Activated naive CD4-positive, alpha-beta T cell treated with anti-CD3 and anti-CD28 coated beads for 36 hours (primary cell): ENCODE measurements at regions of chr15 and their contacts with region 1.

Region 1: DNA sequence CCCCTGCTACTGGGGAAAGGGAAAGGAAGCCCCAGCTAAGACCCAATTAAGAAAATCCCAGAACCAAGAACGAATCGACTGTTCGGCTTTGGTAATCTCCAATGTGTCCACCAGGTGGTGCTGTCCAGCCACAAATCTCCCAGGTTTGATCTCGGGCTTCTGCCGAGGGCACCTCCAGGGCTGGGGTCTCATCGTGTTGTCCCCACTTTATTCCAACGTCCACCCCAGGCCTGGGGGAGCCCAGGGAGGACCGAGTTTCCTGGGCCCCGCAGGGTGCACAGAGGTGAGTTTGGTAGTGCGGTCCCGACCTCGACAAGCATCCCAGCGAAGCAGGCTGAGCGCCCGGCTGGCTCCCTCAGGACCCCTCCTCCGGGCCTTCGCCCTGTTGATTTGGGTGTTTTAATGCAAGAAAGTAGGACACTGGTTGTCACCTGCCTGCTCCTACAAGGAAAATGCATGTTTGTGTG is 185.1 kb downstream of the GOLGA6L6 start:
- DNase-seq: peak; percentile 86
- H3K4me3 Mint-ChIP-seq: no peak overlapping the region
- H3K27ac Mint-ChIP-seq: peak overlapping the region; percentile 13
- H3K4me1 Mint-ChIP-seq: peaks cover 7% of the 10 kb centered on the region
- H3K27me3 Mint-ChIP-seq: no peaks in the 10 kb centered on the region

Region 2: GRCh38 chr15:20409247-20409646 is 52.8 kb after region 1 on chr15:
- CTCF ChIA-PET with region 1: no interaction called
- intact Hi-C with region 1: loop called (anchors 5 kb)
- DNase-seq: no peak
- H3K4me3 Mint-ChIP-seq: no peak overlapping the region
- H3K27ac Mint-ChIP-seq: no peak overlapping the region
- H3K4me1 Mint-ChIP-seq: no peaks in the 10 kb centered on the region
- H3K27me3 Mint-ChIP-seq: no peaks in the 10 kb centered on the region

Region 3: DNA sequence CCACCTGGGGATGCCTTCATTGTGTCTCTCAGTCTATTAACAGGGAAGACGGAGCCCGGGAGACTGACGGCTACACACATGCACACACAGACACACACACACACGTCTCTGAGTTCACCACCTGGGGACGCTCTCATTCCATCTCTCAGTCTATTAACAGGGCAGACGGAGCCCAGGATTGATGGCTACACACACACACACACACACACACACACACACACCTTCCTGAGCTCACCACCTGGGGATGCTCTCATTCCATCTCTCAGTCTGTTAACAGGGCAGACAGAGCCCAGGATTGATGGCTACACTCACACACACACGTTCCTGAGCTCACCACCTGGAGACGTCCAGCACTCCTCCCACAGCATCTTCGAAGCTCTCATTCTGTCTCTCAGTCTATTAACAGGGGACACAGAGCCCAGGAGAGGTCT is 1867.8 kb after region 1 on chr15:
- CTCF ChIA-PET with region 1: interaction called, 97 read pairs
- intact Hi-C with region 1: no loop called
- DNase-seq: peak; percentile 49
- H3K4me3 Mint-ChIP-seq: no peak overlapping the region
- H3K27ac Mint-ChIP-seq: no peak overlapping the region
- H3K4me1 Mint-ChIP-seq: peaks cover 22% of the 10 kb centered on the region
- H3K27me3 Mint-ChIP-seq: peaks cover 3% of the 10 kb centered on the region

Region 4: GRCh38 chr15:22265056-22265945 is 1908.8 kb after region 1 on chr15:
- CTCF ChIA-PET with region 1: no interaction called
- intact Hi-C with region 1: loop called (anchors 1 kb)
- DNase-seq: peak; percentile 45
- H3K4me3 Mint-ChIP-seq: no peak overlapping the region
- H3K27ac Mint-ChIP-seq: no peak overlapping the region
- H3K4me1 Mint-ChIP-seq: peaks cover 9% of the 10 kb centered on the region
- H3K27me3 Mint-ChIP-seq: peaks cover 3% of the 10 kb centered on the region